ACHN (cell line): ENCODE measurements at regions of chr2 and their contacts with region 1.

Region 1: DNA sequence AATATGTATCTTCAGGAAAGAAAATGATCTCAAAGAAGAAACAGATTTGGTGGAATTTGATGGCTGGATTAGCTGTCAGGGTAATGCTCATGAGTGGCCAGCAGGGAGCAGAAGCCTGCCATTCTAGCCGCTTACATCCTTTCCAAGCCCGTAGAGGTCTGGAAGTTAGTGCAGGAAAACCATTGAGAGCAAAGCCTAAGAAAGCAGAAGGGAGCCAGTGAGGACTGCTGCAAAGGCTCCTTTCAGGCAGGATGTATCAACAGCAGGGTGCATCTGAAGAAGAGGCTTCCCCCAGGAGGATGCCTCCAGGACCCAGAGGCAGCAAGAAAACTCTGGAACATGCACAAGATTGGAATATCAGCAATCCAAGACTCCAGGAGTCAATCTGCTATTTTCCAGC is 22.9 kb upstream of the LBH start:
- DNase-seq: peak; percentile 66

Region 2: DNA sequence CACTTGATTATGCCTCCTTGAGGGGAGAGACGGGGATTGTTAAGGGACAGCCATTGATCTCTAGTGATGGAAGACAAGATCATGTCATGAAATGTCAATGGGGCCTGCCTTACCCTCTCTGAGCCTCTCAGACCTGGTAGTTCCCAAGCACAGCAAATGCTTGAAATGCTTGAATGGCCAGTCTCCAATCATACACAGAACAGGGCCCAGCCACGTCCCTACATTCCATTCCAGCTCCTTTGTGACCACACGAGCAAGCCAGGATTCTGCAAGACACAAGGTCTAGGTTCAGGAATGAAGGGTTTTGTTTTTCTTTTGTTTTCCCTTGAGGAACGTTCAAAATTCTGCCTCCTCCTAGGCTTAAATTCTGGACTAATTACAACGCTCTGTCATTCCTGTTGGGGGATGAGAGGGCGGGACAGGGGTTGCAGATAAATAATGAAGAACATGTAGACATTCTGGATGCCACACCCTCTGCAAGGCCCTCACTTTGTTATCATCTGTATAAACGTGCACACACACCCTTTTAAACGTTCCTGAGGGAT is 159.7 kb before region 1 on chr2:
- in situ Hi-C with region 1: no loop called
- DNase-seq: no peak

Region 3: GRCh38 chr2:30666307-30666874 is 457.9 kb after region 1 on chr2:
- in situ Hi-C with region 1: loop called (anchors 25 kb)
- DNase-seq: peak; percentile 58